Heart left ventricle (tissue), 16 donors: ENCODE measurements at regions of chr4 and their contacts with region 1.

Region 1: DNA sequence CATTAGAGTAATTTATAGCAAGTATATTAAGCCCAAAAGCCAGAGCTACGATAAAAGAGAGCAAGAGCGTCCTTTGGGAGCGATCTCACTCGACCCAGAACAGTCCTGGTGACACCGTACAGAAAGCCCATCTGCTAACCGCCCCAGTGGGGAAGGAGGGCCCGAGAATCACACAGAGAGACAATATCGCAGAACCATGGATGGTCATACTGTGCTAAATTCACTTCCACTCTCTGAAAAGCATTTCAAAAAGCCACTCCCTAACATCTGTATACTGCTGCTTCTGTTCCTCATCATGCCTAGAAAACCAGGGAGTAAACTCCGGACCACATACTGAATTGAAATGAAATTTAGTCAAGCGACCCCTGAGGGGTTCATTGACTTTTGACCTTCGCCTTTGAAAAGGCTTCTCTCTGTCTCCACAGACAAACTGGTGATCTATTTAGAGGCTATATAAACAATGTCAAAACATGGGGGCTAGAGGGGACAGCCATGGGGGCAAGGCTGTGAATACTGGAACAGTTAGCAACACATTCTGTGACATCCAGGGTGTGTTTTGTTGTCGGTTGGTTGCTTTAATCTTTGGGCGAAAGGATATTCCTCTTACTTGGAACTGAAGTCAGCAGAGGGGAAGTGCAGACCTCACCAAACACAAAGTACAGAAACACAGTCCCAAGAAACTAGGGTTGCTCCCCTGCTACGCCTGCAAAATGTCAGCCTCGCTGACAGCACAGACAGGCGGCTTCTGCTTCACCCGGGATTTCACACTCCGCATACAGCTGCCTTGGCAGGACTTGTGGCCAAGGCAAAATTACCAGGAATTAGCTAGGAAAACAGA is 129.0 kb upstream of the RASGEF1B start:
- DNase-seq: peak; percentile 66 to 84 (median 77)
- ATAC-seq: peak; percentile 95 to 97 (median 96)
- H3K4me3 ChIP-seq: peak overlapping the region in 2 of 12 donors; percentile 23 to 28
- H3K27ac ChIP-seq: peak overlapping the region in 9 of 12 donors; percentile 3 to 74 (median 62)
- H3K4me1 ChIP-seq: peaks cover 0 to 37% (median 14%) of the 10 kb centered on the region in 12 donors
- H3K27me3 ChIP-seq: no peaks in the 10 kb centered on the region
- CTCF ChIP-seq: no peak
- POLR2A ChIP-seq: no peak

Region 2: GRCh38 chr4:81405894-81406401 is 194.8 kb before region 1 on chr4:
- intact Hi-C with region 1: no loop called
- DNase-seq: peak in 2 of 5 donors; percentile 32 to 49
- ATAC-seq: peak; percentile 57 to 86 (median 72)
- H3K4me3 ChIP-seq: peak overlapping the region in 5 of 12 donors; percentile 14 to 36 (median 27)
- H3K27ac ChIP-seq: no peak overlapping the region
- H3K4me1 ChIP-seq: peaks cover 0 to 10% (median 0%) of the 10 kb centered on the region in 12 donors
- H3K27me3 ChIP-seq: peaks cover 0 to 3% (median 0%) of the 10 kb centered on the region in 9 donors
- CTCF ChIP-seq: peak; percentile 60 to 88 (median 80)
- POLR2A ChIP-seq: no peak

Region 3: GRCh38 chr4:81482326-81482725 is 118.4 kb before region 1 on chr4:
- intact Hi-C with region 1: loop called in 2 of 10 experiments (anchors 10 kb)
- DNase-seq: peak in 1 of 5 donors; percentile 26
- ATAC-seq: peak in 3 of 4 donors; percentile 29 to 61 (median 52)
- H3K4me3 ChIP-seq: no peak overlapping the region
- H3K27ac ChIP-seq: peak overlapping the region in 3 of 12 donors; percentile 1 to 68 (median 9)
- H3K4me1 ChIP-seq: peaks cover 0 to 13% (median 0%) of the 10 kb centered on the region in 12 donors
- H3K27me3 ChIP-seq: no peaks in the 10 kb centered on the region
- CTCF ChIP-seq: no peak
- POLR2A ChIP-seq: no peak

Region 4: DNA sequence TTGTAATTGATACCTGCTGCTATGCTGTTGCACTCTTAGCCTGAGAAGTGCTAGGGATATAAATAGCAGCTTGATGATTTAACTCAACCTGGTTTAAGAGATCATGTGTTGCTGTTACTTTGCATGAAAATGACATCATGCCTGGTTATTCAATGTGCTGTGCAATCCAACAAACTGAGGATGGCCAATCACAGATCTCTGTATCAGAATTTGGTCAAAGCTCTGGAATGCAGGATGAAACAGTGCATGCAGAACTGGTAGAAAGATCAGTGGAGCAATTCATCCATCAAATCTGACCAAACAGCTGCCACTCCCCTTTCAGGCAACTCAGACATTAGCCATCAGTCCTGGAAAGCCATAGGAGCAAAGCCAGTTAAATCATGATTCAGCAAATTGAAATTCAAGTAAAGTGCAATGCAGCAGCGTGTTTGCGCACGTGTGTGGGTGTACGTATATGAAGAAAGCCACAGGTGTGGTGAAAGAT is 31.3 kb after region 1 on chr4:
- intact Hi-C with region 1: loop called in 1 of 10 experiments (anchors 2 kb)
- DNase-seq: no peak
- ATAC-seq: peak in 3 of 4 donors; percentile 68 to 89 (median 75)
- H3K4me3 ChIP-seq: no peak overlapping the region
- H3K27ac ChIP-seq: no peak overlapping the region
- H3K4me1 ChIP-seq: peaks cover 0 to 21% (median 0%) of the 10 kb centered on the region in 12 donors
- H3K27me3 ChIP-seq: no peaks in the 10 kb centered on the region
- CTCF ChIP-seq: no peak
- POLR2A ChIP-seq: no peak